Esophagus muscularis mucosa (tissue), 4 donors: ENCODE measurements at regions of chr5 and their contacts with region 1.

Region 1: DNA sequence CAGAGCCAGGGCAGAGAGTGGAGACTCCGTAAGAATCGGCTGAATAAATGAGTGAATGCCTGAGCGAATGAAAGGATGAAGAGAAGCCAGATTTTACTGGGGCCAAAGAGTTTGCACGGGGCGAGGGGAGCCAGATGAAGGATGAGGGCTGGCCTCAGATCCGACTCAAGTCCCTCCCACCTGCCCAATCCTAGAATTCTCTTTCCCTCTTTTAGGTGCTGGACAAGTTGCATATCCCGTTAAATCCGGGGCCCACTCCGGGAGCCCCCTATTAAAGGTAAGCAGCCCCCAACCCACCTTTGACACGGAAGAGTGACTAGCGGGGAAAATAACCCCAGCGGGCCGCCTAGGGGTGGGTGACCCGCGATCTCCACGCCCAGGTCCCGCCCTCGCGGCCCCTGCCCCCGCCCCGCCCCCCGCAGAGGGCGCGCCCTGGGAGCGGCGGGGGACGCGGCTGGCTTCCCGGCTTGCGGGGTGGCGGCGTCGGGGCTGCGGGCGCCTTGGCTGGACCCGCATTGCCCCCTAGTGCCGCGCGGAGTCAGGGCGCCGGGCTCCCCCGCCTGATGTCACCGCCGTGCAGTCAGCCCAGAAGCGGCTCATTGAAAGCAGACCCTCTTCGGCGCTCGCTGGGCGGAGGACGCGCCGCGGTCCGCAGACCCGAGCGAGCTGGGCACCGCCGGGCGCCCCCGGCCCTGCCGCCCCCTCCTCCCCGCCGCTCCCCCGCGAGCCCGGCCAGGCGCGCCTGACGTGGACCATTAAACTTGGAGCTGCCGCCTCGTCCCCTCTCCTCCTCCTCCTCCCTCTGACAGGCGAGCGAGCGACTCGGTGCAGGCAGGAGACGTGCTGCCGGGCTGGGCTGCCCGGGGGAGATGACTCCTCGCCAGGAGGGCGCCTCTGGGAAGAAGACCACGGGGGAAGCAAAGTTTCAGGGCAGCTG is at the start of gene ADRA1B:
- DNase-seq: no peak
- H3K4me3 ChIP-seq: peak within 1 kb of the TSS; percentile 52 to 66 (median 53)
- H3K27ac ChIP-seq: peak within 1 kb of the TSS; percentile 55 to 71 (median 62)
- H3K4me1 ChIP-seq: peaks cover 6 to 41% (median 28%) of the 10 kb centered on the region in 4 donors
- H3K27me3 ChIP-seq: peaks cover 0 to 63% (median 8%) of the 10 kb centered on the region in 4 donors
- CTCF ChIP-seq: peak; percentile 45 to 61 (median 54)
- EP300 ChIP-seq: no peak
- POLR2A ChIP-seq: no peak
- total RNA-seq, gene ADRA1B: 1.7 to 3.2 (median 2.6) TPM

Region 2: GRCh38 chr5:159444441-159445082 is 471.6 kb before region 1 on chr5:
- intact Hi-C with region 1: loop called (anchors 5 kb)
- DNase-seq: no peak
- H3K4me3 ChIP-seq: no peak overlapping the region
- H3K27ac ChIP-seq: no peak overlapping the region
- H3K4me1 ChIP-seq: no peaks in the 10 kb centered on the region
- H3K27me3 ChIP-seq: peaks cover 0 to 23% (median 4%) of the 10 kb centered on the region in 4 donors
- CTCF ChIP-seq: peak in 1 of 3 experiments; percentile 17
- EP300 ChIP-seq: no peak
- POLR2A ChIP-seq: no peak

Region 3: GRCh38 chr5:159515909-159516415 is 400.2 kb before region 1 on chr5:
- intact Hi-C with region 1: loop called (anchors 10 kb)
- DNase-seq: no peak
- H3K4me3 ChIP-seq: no peak overlapping the region
- H3K27ac ChIP-seq: no peak overlapping the region
- H3K4me1 ChIP-seq: no peaks in the 10 kb centered on the region
- H3K27me3 ChIP-seq: peaks cover 0 to 25% (median 0%) of the 10 kb centered on the region in 4 donors
- CTCF ChIP-seq: peak; percentile 37 to 62 (median 48)
- EP300 ChIP-seq: no peak
- POLR2A ChIP-seq: no peak

Region 4: DNA sequence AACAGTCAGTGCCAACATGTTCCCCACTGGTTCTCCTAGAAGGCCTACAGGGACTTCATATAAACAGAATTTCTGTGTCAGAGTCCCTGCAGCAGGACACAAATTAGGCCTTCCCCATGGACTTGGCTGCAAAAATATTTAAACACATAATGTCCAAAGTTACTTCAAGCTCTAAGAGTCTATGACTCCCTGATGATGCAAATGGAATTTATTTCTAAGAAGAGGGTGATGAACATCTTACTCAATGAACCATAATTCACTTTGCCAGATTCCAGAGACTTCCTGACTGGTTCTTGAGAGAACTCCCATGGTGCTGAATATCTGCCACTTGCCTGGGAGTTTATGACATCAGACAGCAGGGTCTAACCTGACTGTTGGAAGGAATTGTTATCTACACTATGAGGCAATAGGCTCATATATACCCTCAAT is 32.6 kb before region 1 on chr5:
- intact Hi-C with region 1: no loop called
- DNase-seq: no peak
- H3K4me3 ChIP-seq: no peak overlapping the region
- H3K27ac ChIP-seq: peak overlapping the region in 3 of 4 donors; percentile 23 to 42 (median 35)
- H3K4me1 ChIP-seq: peaks cover 0 to 12% (median 9%) of the 10 kb centered on the region in 4 donors
- H3K27me3 ChIP-seq: peaks cover 0 to 8% (median 0%) of the 10 kb centered on the region in 4 donors
- CTCF ChIP-seq: no peak
- EP300 ChIP-seq: no peak
- POLR2A ChIP-seq: no peak